ENCODE measurements at regions of chr17 and their contacts with region 1.

Region 1: DNA sequence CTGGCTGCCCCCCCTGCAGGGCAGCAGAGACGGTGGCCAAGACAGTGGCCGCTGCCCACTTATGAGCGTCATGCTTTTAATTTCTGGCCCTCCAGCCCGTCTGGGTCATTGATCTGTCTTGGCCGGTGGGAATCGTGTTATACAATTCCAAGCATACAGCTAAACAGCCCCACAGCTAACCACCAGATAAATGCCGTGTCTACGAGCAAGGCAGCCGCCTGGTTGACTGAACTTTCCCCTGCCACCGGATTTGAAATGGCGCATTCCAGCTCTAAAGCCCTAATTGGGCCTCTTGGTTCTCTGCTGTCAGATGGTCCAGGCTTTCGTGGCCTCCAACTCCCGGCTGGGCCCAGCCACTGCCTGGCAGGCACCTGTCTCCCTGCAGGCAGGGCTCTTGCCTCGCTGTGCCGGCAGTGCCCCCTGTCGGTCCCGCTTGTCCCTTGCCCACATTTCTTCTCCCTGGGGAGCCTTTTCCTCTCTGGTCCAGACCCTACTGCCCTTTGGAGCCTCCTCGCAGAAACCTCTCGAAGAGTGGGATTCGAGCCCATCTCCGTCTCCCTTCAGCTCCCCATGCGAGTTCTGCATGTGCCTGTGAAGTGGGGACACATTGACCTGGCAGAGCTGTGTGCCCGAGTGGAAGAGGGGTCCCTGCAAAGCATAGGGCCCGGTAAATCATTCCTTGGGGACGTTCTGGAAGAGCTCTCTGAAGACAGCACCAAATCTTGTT is 1.8 kb upstream of the RBFOX3 start:
- DNase-seq: peak; percentile 63
- ATAC-seq: peak; percentile 84
- H3K4me3 ChIP-seq: no peak overlapping the region
- H3K27ac ChIP-seq: no peak overlapping the region
- H3K4me1 ChIP-seq: no peaks in the 10 kb centered on the region
- H3K27me3 ChIP-seq: peaks cover 32% of the 10 kb centered on the region
- CTCF ChIP-seq: peak; percentile 80 to 100 (median 99)
- POLR2A ChIP-seq: no peak
- RAD21 ChIP-seq: peak; percentile 93

Region 2: DNA sequence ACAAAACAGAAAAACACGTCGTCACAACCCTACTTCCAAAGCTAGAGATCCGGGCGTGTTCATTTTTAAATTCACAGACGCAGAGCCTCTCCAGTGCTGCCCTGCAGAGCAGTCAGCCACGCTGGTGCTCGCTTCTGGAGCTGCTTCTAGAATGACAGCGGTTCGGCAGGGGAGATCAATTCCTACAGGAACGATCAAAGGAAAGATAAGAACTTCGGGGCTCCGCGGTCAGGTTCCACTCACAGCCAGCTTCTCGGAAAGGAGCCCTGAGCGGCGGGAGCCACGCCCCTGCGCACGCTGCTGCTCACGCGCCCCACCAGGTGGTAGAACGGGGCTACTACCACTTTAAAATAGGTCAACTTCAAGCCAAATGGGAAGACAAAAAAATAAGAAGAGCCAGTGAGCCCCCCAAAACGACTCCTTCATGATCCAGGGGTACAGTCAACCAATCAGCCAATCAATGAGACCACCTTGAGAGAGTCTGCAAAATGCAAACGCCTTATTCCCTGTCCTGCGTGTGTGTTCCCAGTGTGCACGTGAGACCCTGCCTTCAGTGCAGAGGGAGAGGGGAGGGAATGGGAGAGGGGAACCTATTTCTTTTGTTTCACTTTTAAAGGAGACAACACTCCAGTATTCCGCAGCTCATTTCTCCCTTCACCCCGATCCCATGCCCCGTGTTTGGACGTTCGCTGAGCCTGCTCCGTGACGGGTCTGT is 211.5 kb before region 1 on chr17:
- CTCF ChIA-PET with region 1: interaction called, 16 read pairs
- POLR2A ChIA-PET with region 1: no interaction called
- RAD21 ChIA-PET with region 1: interaction called in 1 of 2 experiments, 3 read pairs
- intact Hi-C with region 1: loop called (anchors 10 kb)
- DNase-seq: peak; percentile 44
- ATAC-seq: peak; percentile 93
- H3K4me3 ChIP-seq: peak overlapping the region; percentile 38 to 43
- H3K27ac ChIP-seq: no peak overlapping the region
- H3K4me1 ChIP-seq: peaks cover 4 to 10% of the 10 kb centered on the region in 2 experiments; a peak in 2 of 4 replicates
- H3K27me3 ChIP-seq: peaks cover 23% of the 10 kb centered on the region
- CTCF ChIP-seq: peak; percentile 75 to 97 (median 97)
- POLR2A ChIP-seq: no peak
- RAD21 ChIP-seq: peak; percentile 60

Region 3: GRCh38 chr17:79427623-79428539 is 184.8 kb before region 1 on chr17:
- CTCF ChIA-PET with region 1: no interaction called
- POLR2A ChIA-PET with region 1: no interaction called
- RAD21 ChIA-PET with region 1: no interaction called
- intact Hi-C with region 1: loop called (anchors 5 kb)
- DNase-seq: no peak
- ATAC-seq: peak; percentile 56
- H3K4me3 ChIP-seq: no peak overlapping the region
- H3K27ac ChIP-seq: no peak overlapping the region
- H3K4me1 ChIP-seq: peaks cover 0 to 3% of the 10 kb centered on the region in 2 experiments; a peak in 1 of 4 replicates
- H3K27me3 ChIP-seq: peaks cover 8% of the 10 kb centered on the region; the same call in 1 of the 2 replicates
- CTCF ChIP-seq: peak in 2 of 3 experiments; percentile 21 to 23; a peak in 4 of 6 replicates
- POLR2A ChIP-seq: no peak
- RAD21 ChIP-seq: no peak; the same call in 1 of the 2 replicates